GM13977 (cell line): ENCODE measurements at regions of chr13 and their contacts with region 1.

Region 1: GRCh38 chr13:41075034-41075433 is 13.7 kb downstream of the WBP4 start:
- DNase-seq: peak; percentile 29
- CTCF ChIP-seq: peak; percentile 55

Region 2: DNA sequence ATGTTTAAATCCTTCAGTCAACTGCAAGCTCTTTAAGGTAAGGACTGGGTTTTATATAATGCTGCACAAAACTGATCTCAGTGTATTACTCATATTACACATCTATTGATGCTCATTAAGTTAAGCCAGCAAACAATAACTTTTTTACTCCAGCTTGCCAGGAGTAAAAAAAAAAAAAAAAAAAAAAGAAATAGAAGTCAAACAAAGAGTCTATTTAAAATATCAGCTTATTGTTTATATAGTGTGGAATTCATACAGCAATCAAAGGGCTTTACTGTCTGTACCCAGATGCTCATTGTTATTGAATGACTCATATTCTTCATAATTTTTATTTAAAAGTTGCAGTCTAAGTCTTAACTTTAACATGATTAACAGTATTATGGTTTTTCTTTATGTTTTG is 141.1 kb after region 1 on chr13:
- in situ Hi-C with region 1: loop called (anchors 10 kb)
- DNase-seq: no peak
- CTCF ChIP-seq: no peak